ENCODE measurements at regions of chr17 and their contacts with region 1.

Region 1: DNA sequence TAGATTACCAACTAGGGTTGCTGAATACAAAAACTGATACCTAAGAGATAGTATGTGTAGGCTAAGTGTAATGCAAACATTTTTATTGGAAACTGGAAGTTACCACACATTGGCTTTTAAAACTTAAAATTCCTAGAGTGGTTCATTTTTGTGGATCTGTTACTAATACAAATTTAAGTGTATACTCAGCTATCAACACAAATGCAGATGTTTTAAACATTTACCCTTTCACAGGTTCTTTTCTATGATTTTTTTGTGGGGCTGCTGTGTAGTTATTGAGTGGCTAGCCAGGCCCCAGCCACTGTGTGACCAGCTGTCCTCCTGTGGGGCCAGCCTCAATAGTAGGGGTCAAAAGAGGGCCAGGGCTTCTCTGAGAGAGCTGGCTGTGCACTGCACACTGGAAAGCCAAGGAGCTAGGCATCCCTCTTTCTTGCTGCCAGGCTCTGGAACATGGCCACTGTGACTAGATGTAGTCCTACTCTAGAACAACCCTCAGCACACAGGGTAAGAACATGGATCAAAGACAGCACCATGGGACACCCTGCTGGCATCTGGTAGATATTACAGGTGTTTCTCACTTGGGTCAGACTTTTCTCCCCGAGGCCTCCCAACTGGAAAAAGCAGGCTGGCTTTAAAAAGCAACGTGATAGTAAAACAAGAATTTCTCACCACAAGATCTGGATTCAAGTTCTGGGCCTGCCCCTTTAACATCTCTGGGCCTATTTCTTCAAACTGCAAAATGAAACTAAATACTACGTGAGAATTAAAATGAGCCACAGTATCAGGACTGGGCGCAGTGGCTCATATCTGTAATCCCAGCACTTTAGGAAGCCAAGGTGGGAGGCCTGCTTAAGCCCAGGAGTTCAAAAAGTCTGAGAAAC is 7.3 kb upstream of the VEZF1 start:
- DNase-seq: peak; percentile 87
- ATAC-seq: peak; percentile 82
- H3K4me3 ChIP-seq: no peak overlapping the region
- H3K27ac ChIP-seq: no peak overlapping the region
- H3K4me1 ChIP-seq: no peaks in the 10 kb centered on the region
- H3K27me3 ChIP-seq: no peaks in the 10 kb centered on the region
- CTCF ChIP-seq: peak; percentile 90

Region 2: DNA sequence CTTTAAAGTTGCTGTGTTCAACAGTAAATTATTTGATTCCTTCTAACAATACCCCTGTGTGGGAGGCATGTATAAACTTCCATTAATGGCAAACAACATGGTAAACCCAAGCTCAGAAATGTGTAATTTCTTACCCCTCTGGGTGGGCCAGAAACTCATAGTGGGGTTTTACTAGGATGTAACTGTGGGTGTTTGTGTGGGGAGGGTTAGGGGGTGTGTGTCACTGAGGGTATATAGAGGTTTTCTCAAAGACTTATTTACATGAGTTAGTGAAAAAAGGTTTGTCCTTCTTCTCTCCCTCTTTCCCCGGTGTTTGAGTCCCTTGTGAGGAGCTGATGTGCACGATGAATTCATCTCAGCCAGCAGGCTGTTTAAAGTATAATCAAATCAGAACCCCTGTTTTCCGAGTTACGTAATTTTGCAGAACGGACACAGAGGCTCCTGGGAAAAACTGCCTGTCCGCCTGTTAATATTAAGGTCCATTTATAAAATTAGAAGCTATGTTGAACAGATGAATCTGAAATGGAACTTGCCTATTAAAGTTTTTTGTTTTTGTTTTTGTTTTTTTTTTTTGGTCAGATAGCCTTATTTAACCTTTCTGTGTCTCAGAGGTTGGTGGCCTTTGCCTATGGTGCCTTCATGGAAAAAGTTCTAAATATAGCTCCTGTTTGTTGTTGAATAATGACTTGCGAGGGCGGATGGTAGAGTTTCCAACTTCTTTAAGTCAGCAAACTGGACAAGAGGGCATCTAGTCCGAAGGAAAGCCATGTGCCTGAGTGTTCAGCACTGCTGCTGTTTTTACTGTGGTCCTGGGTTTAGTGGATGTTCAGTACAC is 665.7 kb before region 1 on chr17:
- CTCF ChIA-PET with region 1: no interaction called
- POLR2A ChIA-PET with region 1: no interaction called
- intact Hi-C with region 1: no loop called
- DNase-seq: no peak
- ATAC-seq: no peak
- H3K4me3 ChIP-seq: no peak overlapping the region
- H3K27ac ChIP-seq: no peak overlapping the region
- H3K4me1 ChIP-seq: no peaks in the 10 kb centered on the region
- H3K27me3 ChIP-seq: no peaks in the 10 kb centered on the region
- CTCF ChIP-seq: no peak

Region 3: DNA sequence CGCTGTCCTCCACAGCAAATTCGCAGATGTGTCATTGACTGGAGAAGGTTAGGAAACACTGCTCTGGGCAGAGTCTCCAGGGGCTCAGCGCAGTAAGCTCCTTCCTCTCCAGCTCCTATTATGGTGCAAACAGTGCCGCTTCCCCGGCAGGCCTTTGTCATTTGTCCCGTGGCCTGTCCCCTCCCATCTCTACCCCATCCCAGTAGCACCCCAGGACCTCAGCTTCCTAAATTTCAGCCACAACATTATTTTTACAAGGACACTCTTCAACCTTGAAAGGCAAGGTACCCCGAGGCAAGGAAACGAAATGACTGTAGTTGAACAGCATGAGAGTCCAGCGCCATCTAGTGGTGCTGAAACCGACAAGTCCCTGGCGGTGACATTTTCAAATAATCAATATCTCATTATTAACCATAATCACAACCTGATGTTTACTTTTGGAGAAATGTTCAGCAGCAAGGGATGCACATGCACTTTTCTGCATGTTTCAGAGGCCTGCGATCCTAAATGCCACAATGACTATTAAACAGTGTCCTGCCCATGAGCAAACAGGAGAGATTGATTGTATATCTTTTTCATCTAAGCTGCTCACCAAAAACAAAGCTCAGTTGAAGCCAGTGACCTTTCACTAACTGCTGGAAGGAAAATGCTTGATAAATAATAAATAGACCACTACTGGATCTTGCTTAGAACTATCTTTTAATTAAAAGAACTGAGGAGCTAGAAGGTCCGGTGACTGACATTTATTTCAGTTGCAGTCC is 162.0 kb before region 1 on chr17:
- CTCF ChIA-PET with region 1: interaction called, 10 read pairs
- POLR2A ChIA-PET with region 1: no interaction called
- intact Hi-C with region 1: no loop called
- DNase-seq: peak; percentile 80
- ATAC-seq: peak; percentile 32
- H3K4me3 ChIP-seq: no peak overlapping the region; the same call in 1 of the 2 replicates
- H3K27ac ChIP-seq: no peak overlapping the region
- H3K4me1 ChIP-seq: peaks cover 27% of the 10 kb centered on the region
- H3K27me3 ChIP-seq: no peaks in the 10 kb centered on the region
- CTCF ChIP-seq: peak; percentile 99

Region 4: DNA sequence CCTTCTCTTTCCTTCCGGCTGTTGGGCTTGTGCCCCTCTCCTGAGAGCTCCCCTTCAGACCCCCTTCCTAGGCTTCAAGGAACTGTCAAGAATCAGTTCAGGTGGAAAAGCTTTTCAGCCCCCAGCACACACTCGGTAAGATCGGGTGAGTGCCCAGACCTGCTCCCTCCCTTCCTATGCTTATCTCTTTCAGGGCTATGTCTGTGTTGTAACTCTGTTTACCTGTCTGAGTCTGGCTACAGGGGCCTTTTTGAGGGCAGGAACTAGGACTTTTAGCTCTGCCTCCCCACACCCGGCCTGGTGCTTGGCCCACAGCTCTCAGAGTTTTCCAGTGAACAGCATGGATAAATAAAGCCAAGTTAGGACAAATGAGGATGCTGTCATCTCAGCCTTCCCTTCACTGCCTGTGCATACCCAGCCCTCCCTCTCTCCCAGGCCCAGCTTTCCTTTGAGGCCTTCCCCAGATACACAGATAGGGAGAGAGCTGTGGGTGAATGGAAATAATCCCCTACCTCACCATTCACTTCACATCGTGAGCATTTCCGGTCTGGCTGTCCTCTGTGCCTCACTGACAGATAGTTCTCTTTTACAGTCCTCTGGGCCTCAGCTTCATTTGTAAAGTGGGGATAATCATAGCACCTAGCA is 139.8 kb before region 1 on chr17:
- CTCF ChIA-PET with region 1: interaction called, 16 read pairs
- POLR2A ChIA-PET with region 1: interaction called, 3 read pairs
- intact Hi-C with region 1: loop called (anchors 1 kb)
- DNase-seq: no peak
- ATAC-seq: no peak
- H3K4me3 ChIP-seq: no peak overlapping the region
- H3K27ac ChIP-seq: no peak overlapping the region
- H3K4me1 ChIP-seq: peaks cover 16% of the 10 kb centered on the region
- H3K27me3 ChIP-seq: no peaks in the 10 kb centered on the region
- CTCF ChIP-seq: no peak

Region 5: DNA sequence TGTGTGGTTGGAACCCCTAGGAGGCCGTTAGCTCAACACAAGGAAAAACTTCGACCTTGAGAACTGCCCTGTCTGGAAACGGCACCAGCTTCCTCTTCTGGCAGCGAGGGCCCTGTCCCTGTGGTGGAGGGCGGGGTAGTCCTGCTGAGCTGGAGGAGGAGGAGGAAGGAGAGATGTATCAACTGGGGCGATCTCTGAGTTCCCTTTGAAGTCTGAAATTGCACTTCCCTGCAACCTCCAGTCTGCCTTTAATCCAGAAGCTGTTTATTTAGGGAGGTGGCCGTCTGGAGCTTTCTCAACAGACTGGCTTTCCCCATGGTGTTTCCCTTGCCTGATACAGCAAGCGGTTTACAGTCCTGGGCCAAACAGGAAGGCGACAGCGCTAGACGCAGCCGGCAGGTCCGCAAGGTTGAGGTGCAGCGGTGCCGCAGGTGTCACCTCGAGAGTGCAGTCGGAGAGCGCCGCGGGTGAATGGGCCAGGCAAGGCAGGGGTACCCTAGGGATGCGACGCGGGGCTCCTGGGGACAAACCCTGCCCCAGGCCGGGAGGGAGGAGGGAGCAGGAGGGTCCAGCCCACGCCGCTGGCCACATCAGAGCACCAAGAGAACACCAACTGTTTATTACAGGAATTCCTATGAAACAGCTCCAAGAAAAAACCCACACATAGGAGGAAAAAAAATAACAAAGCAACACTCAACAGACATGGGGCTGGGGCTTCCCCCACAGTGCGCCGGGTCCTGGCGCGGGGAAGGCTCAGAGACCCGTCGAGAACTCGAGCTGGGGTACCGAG is 134.1 kb before region 1 on chr17:
- CTCF ChIA-PET with region 1: interaction called, 10 read pairs
- POLR2A ChIA-PET with region 1: no interaction called
- intact Hi-C with region 1: loop called (anchors 1 kb)
- DNase-seq: peak; percentile 50
- ATAC-seq: peak; percentile 30
- H3K4me3 ChIP-seq: peak overlapping the region; percentile 63
- H3K27ac ChIP-seq: peak overlapping the region; percentile 8
- H3K4me1 ChIP-seq: peaks cover 27% of the 10 kb centered on the region
- H3K27me3 ChIP-seq: no peaks in the 10 kb centered on the region
- CTCF ChIP-seq: no peak

Region 6: GRCh38 chr17:58020401-58020800 is 25.1 kb after region 1 on chr17:
- CTCF ChIA-PET with region 1: no interaction called
- POLR2A ChIA-PET with region 1: no interaction called
- intact Hi-C with region 1: no loop called
- DNase-seq: no peak
- ATAC-seq: no peak
- H3K4me3 ChIP-seq: no peak overlapping the region
- H3K27ac ChIP-seq: no peak overlapping the region
- H3K4me1 ChIP-seq: peaks cover 13% of the 10 kb centered on the region
- H3K27me3 ChIP-seq: no peaks in the 10 kb centered on the region
- CTCF ChIP-seq: no peak

Region 7: DNA sequence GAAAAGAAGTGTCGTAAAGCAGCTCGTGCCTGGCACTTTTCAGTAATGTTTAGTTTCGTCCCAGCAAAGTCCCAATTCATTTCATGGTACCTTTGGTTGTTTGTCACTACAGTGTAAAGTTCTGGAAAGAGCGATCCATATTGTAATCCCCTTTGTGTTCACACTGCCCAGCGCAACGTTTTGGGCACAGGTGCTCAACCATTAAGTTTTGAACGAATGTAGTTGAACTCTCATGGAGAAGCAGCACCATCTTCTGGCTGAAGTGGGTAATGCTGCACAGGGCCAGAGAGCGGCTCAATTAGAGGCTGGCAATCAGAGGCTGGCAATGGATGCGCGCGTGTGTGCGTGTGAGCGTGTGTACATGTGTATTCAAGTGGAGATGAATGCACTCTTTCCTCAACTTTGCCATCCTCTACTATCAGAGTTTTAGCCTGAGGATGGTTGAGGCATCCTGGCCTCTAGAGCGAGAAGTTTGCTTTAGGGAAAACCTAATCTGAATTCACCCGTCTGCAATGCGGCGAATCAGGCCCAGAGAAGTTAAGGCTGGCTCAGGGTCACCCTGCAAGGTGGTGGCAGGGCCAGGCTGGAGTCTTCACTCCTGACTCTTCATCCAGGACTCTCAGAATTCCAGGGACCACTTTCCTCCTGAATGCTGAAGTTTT is 117.8 kb after region 1 on chr17:
- CTCF ChIA-PET with region 1: interaction called, 3 read pairs
- POLR2A ChIA-PET with region 1: no interaction called
- intact Hi-C with region 1: loop called (anchors 1 kb)
- DNase-seq: peak; percentile 93
- ATAC-seq: peak; percentile 86
- H3K4me3 ChIP-seq: no peak overlapping the region
- H3K27ac ChIP-seq: no peak overlapping the region
- H3K4me1 ChIP-seq: no peaks in the 10 kb centered on the region
- H3K27me3 ChIP-seq: no peaks in the 10 kb centered on the region; the same call in 1 of the 2 replicates
- CTCF ChIP-seq: peak; percentile 98

Region 8: GRCh38 chr17:58127861-58128260 is 132.5 kb after region 1 on chr17:
- CTCF ChIA-PET with region 1: no interaction called
- POLR2A ChIA-PET with region 1: no interaction called
- intact Hi-C with region 1: no loop called
- DNase-seq: no peak
- ATAC-seq: no peak
- H3K4me3 ChIP-seq: no peak overlapping the region
- H3K27ac ChIP-seq: no peak overlapping the region
- H3K4me1 ChIP-seq: no peaks in the 10 kb centered on the region
- H3K27me3 ChIP-seq: peaks cover 63% of the 10 kb centered on the region
- CTCF ChIP-seq: no peak